CD4-positive, alpha-beta T cell (primary cell): ENCODE measurements at regions of chr1 and their contacts with region 1.

Region 1: DNA sequence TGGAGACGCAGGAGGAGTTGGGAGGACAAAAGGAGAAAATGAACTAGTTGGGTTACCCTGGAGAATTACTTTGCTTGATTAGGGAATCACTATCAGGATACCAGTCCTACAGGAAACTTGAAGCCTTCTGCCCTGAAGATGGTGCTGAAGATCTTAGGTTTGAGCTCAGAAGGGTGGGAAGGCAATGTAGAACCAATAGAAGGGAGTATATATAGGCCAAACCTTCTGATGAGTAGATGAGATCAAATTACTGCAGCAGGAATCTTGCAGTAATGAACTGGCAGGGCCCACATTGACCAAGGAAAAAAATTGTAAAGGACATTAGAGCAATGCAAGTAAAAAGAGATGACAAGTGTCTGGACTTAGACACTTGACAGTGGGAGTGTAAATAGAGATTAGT is 116.3 kb upstream of the CACYBP start:
- DNase-seq: peak in 4 of 14 experiments; percentile 12 to 50 (median 32)
- ATAC-seq: peak; percentile 44
- H3K4me3 ChIP-seq: no peak overlapping the region
- H3K4me3 Mint-ChIP-seq: no peak overlapping the region
- H3K27ac ChIP-seq: no peak overlapping the region
- H3K27ac Mint-ChIP-seq: no peak overlapping the region
- H3K4me1 ChIP-seq: no peaks in the 10 kb centered on the region
- H3K4me1 Mint-ChIP-seq: peaks cover 11% of the 10 kb centered on the region
- H3K27me3 ChIP-seq: no peaks in the 10 kb centered on the region
- H3K27me3 Mint-ChIP-seq: no peaks in the 10 kb centered on the region
- CTCF ChIP-seq: peak; percentile 8

Region 2: DNA sequence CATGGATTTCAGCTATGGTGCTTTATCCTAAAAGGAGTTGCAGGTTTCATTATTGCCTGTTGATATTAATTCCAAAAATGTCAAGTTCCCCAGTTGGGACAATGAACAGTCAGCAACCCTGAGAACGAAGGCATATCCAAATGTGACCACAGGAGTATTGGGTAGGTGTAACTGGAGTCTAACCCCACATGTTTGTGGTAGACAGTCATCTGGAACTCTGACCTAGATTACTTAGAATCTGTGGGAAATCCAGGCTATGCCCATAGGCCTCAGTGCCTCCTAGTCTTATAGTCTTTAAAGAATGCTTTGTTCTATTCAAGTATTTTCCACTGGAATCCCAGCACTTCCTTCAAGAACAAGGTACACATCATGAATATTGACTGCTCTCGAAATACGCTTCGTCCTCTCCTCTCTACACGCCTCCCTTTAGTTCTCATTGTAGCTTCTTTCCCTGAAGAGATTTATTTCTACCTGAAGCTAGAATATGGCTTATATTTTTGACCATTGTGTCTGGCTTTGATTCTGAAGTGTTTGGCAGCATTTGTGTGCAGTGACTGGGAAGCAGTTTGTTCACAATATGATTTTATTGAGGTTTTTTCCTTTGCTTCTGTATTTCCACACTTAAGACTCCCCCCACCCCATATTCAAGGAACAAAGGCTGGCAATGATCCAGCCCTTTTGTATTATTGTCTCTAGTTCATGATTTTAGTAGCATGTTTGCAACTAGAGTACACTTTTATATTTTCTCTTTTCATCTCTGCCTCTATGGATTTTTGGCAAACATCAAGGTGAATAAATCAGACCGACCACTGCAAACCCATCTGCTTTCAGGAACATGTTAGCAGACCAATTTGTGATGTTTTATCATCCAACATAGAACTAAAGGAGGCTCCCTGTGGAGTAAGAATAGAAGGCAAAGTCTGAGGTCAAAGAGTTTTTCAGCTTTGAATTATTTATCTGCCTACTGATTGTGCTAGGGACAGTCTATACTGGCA is 257.1 kb before region 1 on chr1:
- CTCF ChIA-PET with region 1: no interaction called
- POLR2A ChIA-PET with region 1: no interaction called
- intact Hi-C with region 1: no loop called
- DNase-seq: no peak
- ATAC-seq: no peak
- H3K4me3 ChIP-seq: no peak overlapping the region
- H3K4me3 Mint-ChIP-seq: no peak overlapping the region
- H3K27ac ChIP-seq: no peak overlapping the region
- H3K27ac Mint-ChIP-seq: no peak overlapping the region
- H3K4me1 ChIP-seq: no peaks in the 10 kb centered on the region
- H3K4me1 Mint-ChIP-seq: no peaks in the 10 kb centered on the region
- H3K27me3 ChIP-seq: no peaks in the 10 kb centered on the region
- H3K27me3 Mint-ChIP-seq: no peaks in the 10 kb centered on the region
- CTCF ChIP-seq: no peak

Region 3: DNA sequence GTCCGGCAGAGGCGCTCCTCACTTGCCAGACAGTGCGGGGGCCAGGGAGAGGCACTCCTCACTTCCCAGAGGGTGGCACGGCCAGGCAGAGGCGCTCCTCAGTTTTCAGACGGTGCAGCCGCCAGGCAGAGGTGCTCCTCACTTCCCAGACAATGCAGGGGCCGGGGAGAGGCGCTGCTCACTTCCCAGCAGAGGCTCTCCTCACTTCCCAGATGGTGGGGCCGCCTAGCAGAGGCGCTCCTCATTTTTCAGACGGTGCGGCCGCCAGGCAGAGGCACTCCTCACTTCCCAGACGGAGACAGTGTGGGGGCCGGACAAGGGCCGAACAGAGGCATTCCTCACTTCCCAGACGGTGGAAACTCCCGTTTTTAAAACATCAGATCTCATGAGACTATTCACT is 122.1 kb before region 1 on chr1:
- CTCF ChIA-PET with region 1: no interaction called
- POLR2A ChIA-PET with region 1: no interaction called
- intact Hi-C with region 1: no loop called
- DNase-seq: no peak
- ATAC-seq: no peak
- H3K4me3 ChIP-seq: no peak overlapping the region
- H3K4me3 Mint-ChIP-seq: no peak overlapping the region
- H3K27ac ChIP-seq: no peak overlapping the region
- H3K27ac Mint-ChIP-seq: no peak overlapping the region
- H3K4me1 ChIP-seq: no peaks in the 10 kb centered on the region
- H3K4me1 Mint-ChIP-seq: no peaks in the 10 kb centered on the region
- H3K27me3 ChIP-seq: no peaks in the 10 kb centered on the region
- H3K27me3 Mint-ChIP-seq: no peaks in the 10 kb centered on the region
- CTCF ChIP-seq: no peak

Region 4: GRCh38 chr1:175129997-175130648 is 246.7 kb after region 1 on chr1:
- CTCF ChIA-PET with region 1: no interaction called
- POLR2A ChIA-PET with region 1: no interaction called
- intact Hi-C with region 1: loop called in 1 of 2 experiments (anchors 10 kb)
- DNase-seq: no peak
- ATAC-seq: no peak
- H3K4me3 ChIP-seq: no peak overlapping the region
- H3K4me3 Mint-ChIP-seq: no peak overlapping the region
- H3K27ac ChIP-seq: no peak overlapping the region
- H3K27ac Mint-ChIP-seq: no peak overlapping the region
- H3K4me1 ChIP-seq: peaks cover 2% of the 10 kb centered on the region
- H3K4me1 Mint-ChIP-seq: no peaks in the 10 kb centered on the region
- H3K27me3 ChIP-seq: peaks cover 0 to 2% of the 10 kb centered on the region in 2 experiments
- H3K27me3 Mint-ChIP-seq: peaks cover 11% of the 10 kb centered on the region
- CTCF ChIP-seq: no peak